ENCODE measurements at regions of chr20 and their contacts with region 1.

Region 1: GRCh38 chr20:36717657-36718056 is 28.2 kb downstream of the NDRG3 start:
- DNase-seq: no peak
- H3K4me3 ChIP-seq: no peak overlapping the region
- H3K27ac ChIP-seq: no peak overlapping the region
- H3K4me1 ChIP-seq: no peaks in the 10 kb centered on the region
- H3K27me3 ChIP-seq: no peaks in the 10 kb centered on the region
- CTCF ChIP-seq: peak in 2 of 3 experiments; percentile 58 to 60; a peak in 3 of 4 replicates
- EP300 ChIP-seq: no peak
- POLR2A ChIP-seq: no peak
- RAD21 ChIP-seq: peak; percentile 59 to 67

Region 2: GRCh38 chr20:36629719-36630681 is 87.7 kb before region 1 on chr20:
- CTCF ChIA-PET with region 1: interaction called, 10 read pairs
- POLR2A ChIA-PET with region 1: no interaction called
- DNase-seq: no peak
- H3K4me3 ChIP-seq: no peak overlapping the region
- H3K27ac ChIP-seq: no peak overlapping the region
- H3K4me1 ChIP-seq: no peaks in the 10 kb centered on the region; a peak in 2 of 7 replicates
- H3K27me3 ChIP-seq: no peaks in the 10 kb centered on the region
- CTCF ChIP-seq: no peak
- EP300 ChIP-seq: no peak
- POLR2A ChIP-seq: no peak
- RAD21 ChIP-seq: no peak

Region 3: GRCh38 chr20:36700438-36700837 is 17.2 kb before region 1 on chr20:
- CTCF ChIA-PET with region 1: interaction called, 13 read pairs
- POLR2A ChIA-PET with region 1: no interaction called
- DNase-seq: no peak
- H3K4me3 ChIP-seq: no peak overlapping the region
- H3K27ac ChIP-seq: no peak overlapping the region
- H3K4me1 ChIP-seq: peaks cover 0 to 12% (median 2%) of the 10 kb centered on the region in 4 experiments; a peak in 2 of 7 replicates
- H3K27me3 ChIP-seq: no peaks in the 10 kb centered on the region
- CTCF ChIP-seq: no peak
- EP300 ChIP-seq: no peak
- POLR2A ChIP-seq: no peak
- RAD21 ChIP-seq: no peak

Region 4: DNA sequence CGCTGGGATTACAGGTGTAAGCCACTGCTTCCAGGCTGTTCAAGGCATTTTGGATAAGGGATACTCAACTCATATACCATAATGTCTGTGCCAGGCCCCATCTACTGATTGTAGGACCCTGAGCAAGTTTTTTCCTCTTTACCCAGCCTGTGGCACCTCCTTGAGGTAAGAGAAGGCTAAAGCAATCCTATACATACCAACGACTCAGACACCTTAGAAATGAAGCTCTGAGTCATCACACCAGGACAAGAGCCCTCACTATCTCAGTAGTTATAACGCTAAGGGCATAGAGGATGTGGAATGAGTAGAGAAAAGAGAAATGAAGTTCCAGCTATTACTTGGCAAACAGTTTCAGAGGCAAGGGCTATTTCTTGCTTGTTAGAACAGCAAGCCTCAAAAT is 11.3 kb after region 1 on chr20:
- CTCF ChIA-PET with region 1: interaction called, 14 read pairs
- POLR2A ChIA-PET with region 1: no interaction called
- DNase-seq: no peak
- H3K4me3 ChIP-seq: no peak overlapping the region
- H3K27ac ChIP-seq: no peak overlapping the region
- H3K4me1 ChIP-seq: peaks cover 0 to 3% (median 0%) of the 10 kb centered on the region in 4 experiments; a peak in 2 of 7 replicates
- H3K27me3 ChIP-seq: no peaks in the 10 kb centered on the region
- CTCF ChIP-seq: peak in 2 of 3 experiments; percentile 59 to 64; a peak in 3 of 4 replicates
- EP300 ChIP-seq: no peak
- POLR2A ChIP-seq: no peak
- RAD21 ChIP-seq: peak; percentile 77 to 83

Region 5: DNA sequence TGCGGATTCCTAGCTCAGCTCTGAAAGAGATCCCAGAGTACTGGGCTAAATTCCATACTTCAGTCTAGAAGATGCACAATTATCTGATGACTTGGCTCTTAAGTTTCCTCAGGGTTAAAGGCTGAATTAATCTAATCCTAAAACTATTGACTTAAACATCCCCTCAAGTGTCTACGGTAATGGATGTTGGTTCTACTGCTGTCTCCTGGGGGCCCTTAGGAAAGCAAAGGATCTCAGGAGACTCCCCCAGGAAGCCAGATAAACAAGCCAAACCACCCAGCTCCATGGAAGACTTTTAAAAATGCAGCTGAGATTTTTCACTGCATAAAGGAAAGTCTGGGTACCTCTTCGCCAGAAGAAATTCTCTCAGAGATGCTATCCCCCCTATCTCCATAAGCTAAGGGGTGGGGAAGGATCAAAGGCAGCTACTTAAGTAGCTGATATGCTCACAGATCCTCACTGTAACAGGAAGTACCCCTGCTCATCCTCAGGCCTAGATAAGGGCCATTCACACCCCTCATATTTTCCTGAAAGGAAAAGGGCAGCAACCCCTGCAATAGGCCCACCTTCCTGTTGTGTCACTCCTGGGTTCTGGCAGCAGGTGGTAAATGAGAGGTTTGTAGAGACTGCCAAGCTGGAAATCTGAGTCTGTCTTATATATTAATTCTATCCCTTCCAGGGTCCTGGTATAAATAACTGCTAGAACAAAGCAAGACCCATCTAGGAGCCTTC is 19.0 kb after region 1 on chr20:
- CTCF ChIA-PET with region 1: interaction called, 14 read pairs
- POLR2A ChIA-PET with region 1: no interaction called
- DNase-seq: no peak
- H3K4me3 ChIP-seq: no peak overlapping the region
- H3K27ac ChIP-seq: no peak overlapping the region
- H3K4me1 ChIP-seq: peaks cover 0 to 13% (median 0%) of the 10 kb centered on the region in 4 experiments; a peak in 4 of 7 replicates
- H3K27me3 ChIP-seq: no peaks in the 10 kb centered on the region
- CTCF ChIP-seq: no peak
- EP300 ChIP-seq: no peak
- POLR2A ChIP-seq: no peak
- RAD21 ChIP-seq: no peak